CD8-positive, alpha-beta T cell (primary cell): ENCODE measurements at regions of chr20 and their contacts with region 1.

Region 1: DNA sequence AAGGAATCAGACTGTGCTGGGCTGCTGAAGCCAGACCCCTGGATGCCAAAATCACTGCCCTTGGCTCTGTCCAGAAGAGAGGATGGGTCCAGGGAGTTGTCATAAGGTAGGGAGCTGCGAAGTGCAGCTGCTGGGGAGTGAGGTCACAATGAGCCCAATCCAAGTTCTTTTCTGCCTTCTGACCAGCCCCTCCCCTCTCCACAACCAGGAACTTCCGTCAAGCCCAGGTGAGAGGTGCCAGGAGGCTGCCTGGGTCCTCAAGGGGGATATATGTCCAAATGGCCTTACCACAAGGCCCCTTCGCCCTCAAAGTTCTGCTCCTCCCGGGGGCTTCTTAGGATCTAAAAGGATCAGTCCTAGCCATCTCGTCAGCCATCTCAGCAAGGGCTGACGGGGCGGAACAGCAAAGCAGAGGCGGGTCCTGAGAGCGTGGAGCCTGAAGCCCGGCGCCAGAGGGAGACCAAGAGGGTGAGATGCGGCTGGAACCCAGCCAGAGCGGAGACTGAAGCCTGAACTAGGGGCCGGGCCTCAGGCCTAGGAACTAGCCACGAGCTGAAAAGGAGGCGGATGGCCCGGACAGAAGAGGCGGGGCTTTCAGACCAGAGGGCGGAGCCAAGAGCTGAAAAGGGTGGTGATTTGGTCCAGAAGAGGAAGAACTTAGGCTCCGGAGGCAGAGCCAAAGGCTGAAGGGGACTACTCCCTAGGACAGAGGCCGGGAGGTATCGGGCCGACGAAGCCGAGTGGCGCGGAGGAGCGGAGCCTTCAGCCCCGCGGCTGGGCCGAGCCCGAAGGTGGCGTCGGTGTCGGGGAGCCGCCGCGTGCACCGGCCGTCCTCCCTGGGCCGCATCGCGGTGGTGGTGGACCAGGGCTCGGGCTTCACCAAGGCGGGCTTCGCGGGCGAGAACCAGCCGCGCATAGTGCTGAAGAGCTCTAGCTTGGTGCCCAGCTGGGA is at the start of gene ACTL10:
- DNase-seq: peak; percentile 53 to 90 (median 78)
- ATAC-seq: peak; percentile 47
- H3K4me3 ChIP-seq: peak within 1 kb of the TSS; percentile 73 to 86
- H3K4me3 Mint-ChIP-seq: peak within 1 kb of the TSS; percentile 96
- H3K27ac ChIP-seq: peak within 1 kb of the TSS; percentile 25 to 80
- H3K27ac Mint-ChIP-seq: peak within 1 kb of the TSS; percentile 93
- H3K4me1 ChIP-seq: peaks cover 28% of the 10 kb centered on the region
- H3K4me1 Mint-ChIP-seq: peaks cover 39% of the 10 kb centered on the region
- H3K27me3 ChIP-seq: no peaks in the 10 kb centered on the region
- H3K27me3 Mint-ChIP-seq: no peaks in the 10 kb centered on the region
- CTCF ChIP-seq: no peak
- total RNA-seq, gene ACTL10: 0.65 to 0.75 TPM

Region 2: GRCh38 chr20:33401184-33401920 is 265.2 kb before region 1 on chr20 and contains the start of gene CDK5RAP1:
- CTCF ChIA-PET with region 1: interaction called, 7 read pairs
- POLR2A ChIA-PET with region 1: interaction called, 6 read pairs
- intact Hi-C with region 1: loop called (anchors 2 to 5 kb)
- DNase-seq: peak; percentile 71 to 93 (median 85)
- ATAC-seq: peak; percentile 96
- H3K4me3 ChIP-seq: peak within 1 kb of the TSS; percentile 66 to 67
- H3K4me3 Mint-ChIP-seq: peak within 1 kb of the TSS; percentile 97
- H3K27ac ChIP-seq: peak within 1 kb of the TSS; percentile 56 to 64
- H3K27ac Mint-ChIP-seq: peak within 1 kb of the TSS; percentile 93
- H3K4me1 ChIP-seq: peaks cover 26% of the 10 kb centered on the region
- H3K4me1 Mint-ChIP-seq: peaks cover 55% of the 10 kb centered on the region
- H3K27me3 ChIP-seq: no peaks in the 10 kb centered on the region
- H3K27me3 Mint-ChIP-seq: no peaks in the 10 kb centered on the region
- CTCF ChIP-seq: no peak
- total RNA-seq, gene CDK5RAP1: 60.7 to 69.9 TPM

Region 3: GRCh38 chr20:33450867-33451266 is 215.7 kb before region 1 on chr20:
- CTCF ChIA-PET with region 1: interaction called, 34 read pairs
- POLR2A ChIA-PET with region 1: interaction called, 6 read pairs
- intact Hi-C with region 1: no loop called
- DNase-seq: no peak
- ATAC-seq: no peak
- H3K4me3 ChIP-seq: no peak overlapping the region
- H3K4me3 Mint-ChIP-seq: no peak overlapping the region
- H3K27ac ChIP-seq: no peak overlapping the region
- H3K27ac Mint-ChIP-seq: no peak overlapping the region
- H3K4me1 ChIP-seq: no peaks in the 10 kb centered on the region
- H3K4me1 Mint-ChIP-seq: no peaks in the 10 kb centered on the region
- H3K27me3 ChIP-seq: no peaks in the 10 kb centered on the region
- H3K27me3 Mint-ChIP-seq: no peaks in the 10 kb centered on the region
- CTCF ChIP-seq: no peak

Region 4: DNA sequence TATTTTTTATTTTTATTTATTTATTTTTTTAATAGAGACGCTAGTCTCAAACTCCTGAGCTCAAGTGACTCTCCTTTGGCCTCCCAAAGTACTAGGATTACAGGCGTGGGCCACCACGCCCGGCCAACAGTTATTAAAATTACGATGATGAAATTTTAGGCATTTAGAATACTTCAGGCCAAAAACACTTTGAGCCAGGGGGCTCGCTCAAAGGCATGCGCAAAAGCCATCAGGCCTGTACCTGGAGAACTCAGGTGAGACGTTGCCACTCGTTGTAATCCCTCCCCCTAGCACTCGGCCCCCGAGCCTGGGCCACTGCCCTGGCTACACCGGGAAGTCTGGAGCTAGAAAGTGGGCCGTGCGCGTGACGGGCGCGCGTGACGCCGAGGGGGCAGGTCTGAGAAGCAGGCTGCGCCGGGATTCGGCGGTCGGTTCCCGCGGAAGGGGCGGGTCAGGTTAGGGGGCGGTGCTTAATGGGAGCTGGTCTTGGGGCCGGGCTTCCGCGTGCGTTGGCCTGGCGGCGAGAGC is 177.0 kb before region 1 on chr20:
- CTCF ChIA-PET with region 1: interaction called, 11 read pairs
- POLR2A ChIA-PET with region 1: interaction called, 25 read pairs
- intact Hi-C with region 1: no loop called
- DNase-seq: peak; percentile 98 to 99 (median 99)
- ATAC-seq: peak; percentile 94
- H3K4me3 ChIP-seq: peak overlapping the region; percentile 58 to 89
- H3K4me3 Mint-ChIP-seq: peak overlapping the region; percentile 89
- H3K27ac ChIP-seq: peak overlapping the region; percentile 96 to 97
- H3K27ac Mint-ChIP-seq: peak overlapping the region; percentile 96
- H3K4me1 ChIP-seq: peaks cover 11% of the 10 kb centered on the region
- H3K4me1 Mint-ChIP-seq: peaks cover 19% of the 10 kb centered on the region
- H3K27me3 ChIP-seq: no peaks in the 10 kb centered on the region
- H3K27me3 Mint-ChIP-seq: no peaks in the 10 kb centered on the region
- CTCF ChIP-seq: no peak

Region 5: DNA sequence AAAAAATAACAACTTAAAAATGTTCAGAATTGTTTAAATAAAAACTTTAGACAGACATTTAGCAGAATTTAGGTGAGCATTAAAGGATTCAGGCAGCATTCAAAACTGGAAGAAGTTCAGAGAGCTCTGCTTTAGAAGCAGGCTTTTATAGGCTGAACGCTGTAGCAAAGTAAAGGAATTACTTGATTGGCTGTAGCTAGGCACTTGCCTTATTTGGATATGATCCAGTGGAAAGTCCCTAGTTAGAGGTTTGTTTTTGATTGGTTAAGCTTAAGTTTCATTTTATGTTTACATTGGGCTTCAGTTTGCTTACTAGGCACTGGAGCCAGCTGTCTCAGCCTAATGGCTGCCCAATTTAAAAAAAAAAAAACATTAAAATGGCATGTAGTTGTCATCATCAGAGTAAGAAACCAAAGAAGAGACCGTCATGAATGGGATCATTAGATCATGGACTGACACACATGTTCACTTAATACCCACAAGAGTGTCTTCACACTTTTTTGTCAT is 111.6 kb before region 1 on chr20:
- CTCF ChIA-PET with region 1: interaction called, 5 read pairs
- POLR2A ChIA-PET with region 1: no interaction called
- intact Hi-C with region 1: loop called (anchors 2 to 5 kb)
- DNase-seq: peak in 6 of 9 experiments; percentile 3 to 95 (median 43)
- ATAC-seq: peak; percentile 95
- H3K4me3 ChIP-seq: peak overlapping the region; percentile 11 to 24
- H3K4me3 Mint-ChIP-seq: peak overlapping the region; percentile 72
- H3K27ac ChIP-seq: peak overlapping the region; percentile 62 to 92
- H3K27ac Mint-ChIP-seq: peak overlapping the region; percentile 96
- H3K4me1 ChIP-seq: peaks cover 14% of the 10 kb centered on the region
- H3K4me1 Mint-ChIP-seq: peaks cover 28% of the 10 kb centered on the region
- H3K27me3 ChIP-seq: no peaks in the 10 kb centered on the region
- H3K27me3 Mint-ChIP-seq: no peaks in the 10 kb centered on the region
- CTCF ChIP-seq: no peak

Region 6: GRCh38 chr20:33679758-33680485 is 13.4 kb after region 1 on chr20:
- CTCF ChIA-PET with region 1: interaction called, 57 read pairs
- POLR2A ChIA-PET with region 1: interaction called, 10 read pairs
- intact Hi-C with region 1: no loop called
- DNase-seq: peak in 6 of 9 experiments; percentile 38 to 80 (median 62)
- ATAC-seq: peak; percentile 71
- H3K4me3 ChIP-seq: no peak overlapping the region
- H3K4me3 Mint-ChIP-seq: peak overlapping the region; percentile 18
- H3K27ac ChIP-seq: peak overlapping the region in 1 of 2 experiments; percentile 43
- H3K27ac Mint-ChIP-seq: no peak overlapping the region
- H3K4me1 ChIP-seq: peaks cover 26% of the 10 kb centered on the region
- H3K4me1 Mint-ChIP-seq: peaks cover 21% of the 10 kb centered on the region
- H3K27me3 ChIP-seq: no peaks in the 10 kb centered on the region
- H3K27me3 Mint-ChIP-seq: no peaks in the 10 kb centered on the region
- CTCF ChIP-seq: no peak

Region 7: DNA sequence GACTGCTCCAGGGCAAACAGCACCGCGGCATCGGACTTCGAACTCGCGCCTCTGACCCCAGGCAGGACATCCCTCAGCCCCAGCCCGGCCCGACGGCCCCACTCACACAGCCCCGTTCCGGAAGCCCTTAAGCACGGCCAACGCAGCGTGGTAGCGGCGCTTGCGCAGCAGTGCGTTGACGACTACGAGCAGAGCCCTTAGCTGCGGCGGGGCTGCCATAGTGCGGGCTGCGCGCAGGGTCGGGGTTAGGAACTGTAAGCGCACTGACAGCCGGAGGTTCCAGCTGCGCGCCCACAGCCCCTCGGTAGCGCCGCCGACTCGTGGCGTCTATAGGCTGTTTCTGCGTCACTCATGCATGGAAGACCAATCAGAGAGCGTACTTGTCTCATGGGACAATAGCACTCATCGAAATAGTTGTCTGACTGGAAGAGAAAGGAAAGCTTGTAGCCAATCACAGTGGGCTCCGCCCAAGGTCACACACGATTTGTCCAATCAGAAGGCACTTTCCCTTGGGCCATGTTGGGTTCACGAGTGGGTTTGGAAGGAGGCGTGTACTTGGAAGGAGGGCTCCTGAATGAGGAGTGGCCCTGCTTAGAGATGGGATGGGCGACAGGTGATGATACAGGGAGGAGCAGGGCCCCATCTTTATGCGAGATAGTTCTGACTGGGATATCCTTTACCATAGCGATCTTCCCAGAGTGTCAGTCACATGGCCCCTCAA is 53.6 kb after region 1 on chr20 and contains the start of gene PXMP4:
- CTCF ChIA-PET with region 1: interaction called, 6 read pairs
- POLR2A ChIA-PET with region 1: interaction called, 13 read pairs
- intact Hi-C with region 1: loop called in 1 of 2 experiments (anchors 1 kb)
- DNase-seq: peak; percentile 71 to 97 (median 84)
- ATAC-seq: peak; percentile 94
- H3K4me3 ChIP-seq: peak within 1 kb of the TSS; percentile 72 to 95
- H3K4me3 Mint-ChIP-seq: peak within 1 kb of the TSS; percentile 86
- H3K27ac ChIP-seq: peak within 1 kb of the TSS; percentile 68 to 78
- H3K27ac Mint-ChIP-seq: peak within 1 kb of the TSS; percentile 91
- H3K4me1 ChIP-seq: peaks cover 16% of the 10 kb centered on the region
- H3K4me1 Mint-ChIP-seq: peaks cover 29% of the 10 kb centered on the region
- H3K27me3 ChIP-seq: no peaks in the 10 kb centered on the region
- H3K27me3 Mint-ChIP-seq: no peaks in the 10 kb centered on the region
- CTCF ChIP-seq: no peak
- total RNA-seq, gene PXMP4: 2.7 to 2.8 TPM

Region 8: GRCh38 chr20:33744773-33745385 is 78.3 kb after region 1 on chr20:
- CTCF ChIA-PET with region 1: no interaction called
- POLR2A ChIA-PET with region 1: no interaction called
- intact Hi-C with region 1: no loop called
- DNase-seq: no peak
- ATAC-seq: no peak
- H3K4me3 ChIP-seq: no peak overlapping the region
- H3K4me3 Mint-ChIP-seq: no peak overlapping the region
- H3K27ac ChIP-seq: no peak overlapping the region
- H3K27ac Mint-ChIP-seq: no peak overlapping the region
- H3K4me1 ChIP-seq: no peaks in the 10 kb centered on the region
- H3K4me1 Mint-ChIP-seq: no peaks in the 10 kb centered on the region
- H3K27me3 ChIP-seq: no peaks in the 10 kb centered on the region
- H3K27me3 Mint-ChIP-seq: no peaks in the 10 kb centered on the region
- CTCF ChIP-seq: no peak